AG04449 (cell line): ENCODE measurements at regions of chr13 and their contacts with region 1.

Region 1: GRCh38 chr13:29472332-29472961 is 123.0 kb downstream of the SLC7A1 start:
- DNase-seq: no peak
- H3K4me3 ChIP-seq: no peak overlapping the region
- CTCF ChIP-seq: peak; percentile 99

Region 2: GRCh38 chr13:29454911-29455481 is 17.5 kb before region 1 on chr13:
- CTCF ChIA-PET with region 1: interaction called, 18 read pairs
- POLR2A ChIA-PET with region 1: no interaction called
- DNase-seq: no peak
- H3K4me3 ChIP-seq: no peak overlapping the region
- CTCF ChIP-seq: peak; percentile 10

Region 3: DNA sequence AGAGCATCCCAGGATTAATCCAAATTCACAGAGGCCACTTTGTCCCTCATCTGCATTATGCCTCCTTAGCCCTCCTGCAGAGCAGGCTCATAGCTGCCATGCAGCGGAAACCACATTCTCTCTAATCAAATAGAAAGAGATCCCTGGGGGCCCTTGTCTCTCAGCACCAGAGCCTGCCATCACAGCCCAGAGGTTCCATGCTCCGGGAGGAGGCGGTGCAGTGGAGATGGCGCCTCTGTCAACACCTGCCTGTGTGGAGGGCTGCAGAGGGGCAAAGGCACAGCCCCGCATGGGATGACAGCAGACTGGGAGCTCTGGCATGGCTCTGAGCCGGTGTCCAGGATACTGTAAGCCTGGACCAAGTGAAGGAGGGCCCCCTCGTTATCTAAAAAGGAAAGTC is 11.8 kb after region 1 on chr13:
- CTCF ChIA-PET with region 1: interaction called, 42 read pairs
- POLR2A ChIA-PET with region 1: no interaction called
- DNase-seq: no peak
- H3K4me3 ChIP-seq: no peak overlapping the region
- CTCF ChIP-seq: no peak

Region 4: GRCh38 chr13:29702912-29703351 is 230.5 kb after region 1 on chr13:
- CTCF ChIA-PET with region 1: interaction called, 58 read pairs
- POLR2A ChIA-PET with region 1: no interaction called
- DNase-seq: peak; percentile 72
- H3K4me3 ChIP-seq: peak overlapping the region; percentile 4
- CTCF ChIP-seq: no peak

Region 5: DNA sequence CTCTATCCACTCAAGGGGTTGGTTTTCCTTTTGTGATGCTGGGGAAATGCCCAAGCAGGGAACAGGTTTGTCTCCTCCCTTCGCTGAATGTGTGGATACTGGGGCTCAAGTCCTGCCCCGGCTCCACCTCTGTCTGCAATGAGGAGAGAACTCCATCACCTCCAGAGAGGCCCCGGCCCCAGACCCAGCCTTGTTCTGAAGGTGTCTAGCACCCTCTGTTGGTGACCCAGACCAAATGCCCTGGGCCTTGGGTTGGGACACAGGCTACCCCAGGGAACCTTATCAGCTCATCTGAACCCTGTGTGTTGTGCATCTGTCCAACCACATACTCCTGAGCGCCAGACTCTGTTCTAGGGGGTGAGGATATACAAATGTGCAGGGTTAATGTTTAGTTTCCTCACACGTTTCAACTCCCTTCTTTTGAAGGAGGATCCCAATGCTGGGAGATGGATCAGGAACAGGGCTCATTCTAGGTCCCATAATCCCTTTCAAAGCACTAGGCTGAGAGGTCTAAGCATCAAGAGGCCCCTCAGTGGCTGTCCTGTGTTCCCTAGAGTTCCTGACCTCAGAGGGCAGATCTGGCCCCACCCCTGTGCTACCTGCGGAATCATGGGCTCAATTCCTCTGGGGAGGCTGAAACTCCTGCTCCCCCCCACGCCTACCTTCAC is 235.6 kb after region 1 on chr13:
- CTCF ChIA-PET with region 1: interaction called, 58 read pairs
- POLR2A ChIA-PET with region 1: no interaction called
- DNase-seq: no peak
- H3K4me3 ChIP-seq: no peak overlapping the region
- CTCF ChIP-seq: peak; percentile 76